ENCODE measurements at regions of chr6 and their contacts with region 1.

Region 1: GRCh38 chr6:63802606-63803206 is 167.1 kb downstream of the PHF3 start:
- DNase-seq: peak; percentile 56
- H3K4me3 Mint-ChIP-seq: no peak overlapping the region
- H3K27ac Mint-ChIP-seq: peak overlapping the region; percentile 99
- H3K4me1 Mint-ChIP-seq: peaks cover 35% of the 10 kb centered on the region
- H3K27me3 Mint-ChIP-seq: no peaks in the 10 kb centered on the region
- CTCF ChIP-seq: peak; percentile 80

Region 2: GRCh38 chr6:63347599-63347998 is 455.1 kb before region 1 on chr6:
- CTCF ChIA-PET with region 1: interaction called, 103 read pairs
- POLR2A ChIA-PET with region 1: interaction called, 15 read pairs
- intact Hi-C with region 1: no loop called
- DNase-seq: peak; percentile 72
- H3K4me3 Mint-ChIP-seq: no peak overlapping the region
- H3K27ac Mint-ChIP-seq: peak overlapping the region; percentile 43
- H3K4me1 Mint-ChIP-seq: peaks cover 13% of the 10 kb centered on the region
- H3K27me3 Mint-ChIP-seq: no peaks in the 10 kb centered on the region
- CTCF ChIP-seq: no peak

Region 3: DNA sequence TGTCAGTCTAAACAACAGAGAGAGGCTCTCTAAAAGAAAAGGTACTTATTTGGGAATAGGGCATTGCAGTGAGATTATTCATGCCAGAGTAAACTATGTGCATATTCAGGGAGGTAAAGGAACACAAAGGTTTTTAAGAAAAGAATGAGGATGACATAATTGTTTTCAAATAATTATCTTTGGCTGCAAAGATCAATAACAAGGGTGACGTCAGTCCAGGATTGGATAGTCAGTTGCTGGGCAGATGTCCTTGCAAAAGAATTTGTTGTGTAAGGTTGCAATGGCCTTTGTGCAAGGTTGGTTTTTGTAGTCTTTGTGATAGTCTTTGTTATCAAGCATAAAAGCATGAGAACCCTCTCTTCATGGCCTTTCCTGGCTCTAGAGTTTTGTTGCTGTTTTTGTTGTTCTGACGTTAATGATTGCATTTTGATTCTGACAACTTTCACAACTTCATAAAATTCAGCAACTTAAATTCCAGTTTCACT is 212.7 kb before region 1 on chr6:
- CTCF ChIA-PET with region 1: interaction called, 13 read pairs
- POLR2A ChIA-PET with region 1: interaction called, 3 read pairs
- intact Hi-C with region 1: no loop called
- DNase-seq: no peak
- H3K4me3 Mint-ChIP-seq: no peak overlapping the region
- H3K27ac Mint-ChIP-seq: no peak overlapping the region
- H3K4me1 Mint-ChIP-seq: no peaks in the 10 kb centered on the region
- H3K27me3 Mint-ChIP-seq: no peaks in the 10 kb centered on the region
- CTCF ChIP-seq: no peak

Region 4: GRCh38 chr6:63635588-63636517 is 166.9 kb before region 1 on chr6 and contains the start of gene PHF3:
- CTCF ChIA-PET with region 1: interaction called, 4 read pairs
- POLR2A ChIA-PET with region 1: interaction called, 18 read pairs
- intact Hi-C with region 1: loop called (anchors 5 kb)
- DNase-seq: peak; percentile 86
- H3K4me3 Mint-ChIP-seq: peak within 1 kb of the TSS; percentile 89
- H3K27ac Mint-ChIP-seq: peak within 1 kb of the TSS; percentile 95
- H3K4me1 Mint-ChIP-seq: peaks cover 24% of the 10 kb centered on the region
- H3K27me3 Mint-ChIP-seq: no peaks in the 10 kb centered on the region
- CTCF ChIP-seq: peak; percentile 5
- total RNA-seq, gene PHF3: 41.0 and 46.4 TPM in 2 replicates

Region 5: DNA sequence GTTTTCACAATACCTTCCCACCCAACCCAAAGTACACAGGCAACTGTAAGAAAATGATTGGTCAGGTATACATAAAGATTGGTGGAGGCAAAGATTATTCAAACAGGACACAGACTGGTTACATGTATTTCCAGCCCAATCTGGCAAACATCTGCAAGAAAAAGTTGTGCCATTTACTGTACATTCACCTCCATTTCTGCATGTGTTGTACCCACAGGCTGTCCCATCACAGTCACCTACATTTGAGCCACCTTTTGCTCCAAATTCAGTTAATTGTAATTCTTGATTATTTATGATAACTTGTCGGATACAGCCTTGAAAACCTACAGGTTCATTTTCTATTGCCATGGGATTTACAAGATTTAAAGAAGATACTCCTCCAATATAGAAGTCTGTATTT is 81.5 kb before region 1 on chr6:
- CTCF ChIA-PET with region 1: no interaction called
- POLR2A ChIA-PET with region 1: no interaction called
- intact Hi-C with region 1: no loop called
- DNase-seq: no peak
- H3K4me3 Mint-ChIP-seq: no peak overlapping the region
- H3K27ac Mint-ChIP-seq: no peak overlapping the region
- H3K4me1 Mint-ChIP-seq: no peaks in the 10 kb centered on the region
- H3K27me3 Mint-ChIP-seq: no peaks in the 10 kb centered on the region
- CTCF ChIP-seq: no peak

Region 6: GRCh38 chr6:63816982-63817436 is 14.3 kb after region 1 on chr6:
- CTCF ChIA-PET with region 1: interaction called, 27 read pairs
- POLR2A ChIA-PET with region 1: interaction called, 33 read pairs
- intact Hi-C with region 1: no loop called
- DNase-seq: peak; percentile 22
- H3K4me3 Mint-ChIP-seq: no peak overlapping the region
- H3K27ac Mint-ChIP-seq: no peak overlapping the region
- H3K4me1 Mint-ChIP-seq: peaks cover 8% of the 10 kb centered on the region
- H3K27me3 Mint-ChIP-seq: no peaks in the 10 kb centered on the region
- CTCF ChIP-seq: no peak

Region 7: DNA sequence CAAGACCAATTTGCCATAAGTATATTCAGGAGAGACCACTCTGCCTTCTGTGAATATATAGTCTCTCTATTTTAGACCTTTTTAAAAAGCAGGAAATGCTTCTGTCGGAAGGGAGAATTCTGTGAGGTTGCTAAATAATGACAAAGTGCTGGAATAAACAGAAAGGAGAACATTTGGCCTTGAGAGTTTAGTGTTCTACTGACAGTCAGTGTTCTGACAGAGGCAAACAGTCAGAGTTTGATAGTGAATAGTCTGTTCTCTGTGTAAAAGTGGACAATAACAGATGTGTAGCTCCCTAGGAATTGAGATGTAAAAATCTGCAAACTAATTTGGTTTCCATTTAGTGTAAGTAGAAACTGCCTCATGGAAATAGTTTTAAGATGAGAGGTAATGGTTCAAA is 53.6 kb after region 1 on chr6:
- CTCF ChIA-PET with region 1: no interaction called
- POLR2A ChIA-PET with region 1: no interaction called
- intact Hi-C with region 1: no loop called
- DNase-seq: no peak
- H3K4me3 Mint-ChIP-seq: no peak overlapping the region
- H3K27ac Mint-ChIP-seq: no peak overlapping the region
- H3K4me1 Mint-ChIP-seq: no peaks in the 10 kb centered on the region
- H3K27me3 Mint-ChIP-seq: no peaks in the 10 kb centered on the region
- CTCF ChIP-seq: no peak